ENCODE measurements at regions of chr17 and their contacts with region 1.

Region 1: DNA sequence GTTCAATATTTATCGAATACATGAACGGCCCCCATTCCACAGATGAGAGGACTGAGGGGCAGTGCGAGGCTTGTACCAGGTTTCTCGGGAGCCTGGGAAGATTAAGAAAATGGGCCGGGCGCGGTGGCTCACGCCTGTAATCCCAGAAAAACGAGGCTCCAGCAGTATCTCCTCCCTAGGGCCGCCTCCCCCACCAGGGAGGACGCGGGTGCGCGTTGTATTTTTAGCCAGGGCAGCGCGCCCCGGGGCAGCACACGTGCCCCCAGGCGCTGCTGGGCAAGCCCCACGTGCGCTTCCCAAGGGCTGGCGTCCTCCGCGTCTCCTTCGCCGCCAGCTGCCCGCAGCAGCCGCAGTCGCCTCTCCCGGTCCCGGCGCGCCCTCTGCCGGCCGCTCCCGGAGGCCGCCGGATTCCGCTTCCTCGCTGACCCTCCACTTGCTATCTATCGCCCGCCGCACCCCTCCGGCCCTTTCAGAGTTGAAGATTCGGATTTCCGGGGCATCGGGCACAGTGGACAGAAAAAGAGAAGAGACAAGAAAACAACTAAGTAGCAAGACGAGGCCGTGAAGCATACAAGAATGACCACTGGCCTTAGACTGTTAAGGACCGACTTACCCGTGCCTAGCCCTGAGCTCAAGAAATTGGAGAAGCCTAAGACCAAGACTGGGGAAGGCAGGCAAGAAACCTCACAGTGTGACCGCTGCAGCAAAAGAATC is 1.9 kb upstream of the YBX2 start:
- DNase-seq: peak; percentile 64
- H3K4me3 Mint-ChIP-seq: no peak overlapping the region
- H3K27ac Mint-ChIP-seq: no peak overlapping the region
- H3K4me1 Mint-ChIP-seq: peaks cover 13% of the 10 kb centered on the region
- H3K27me3 Mint-ChIP-seq: peaks cover 36% of the 10 kb centered on the region

Region 2: GRCh38 chr17:7045909-7046724 is 250.2 kb before region 1 on chr17:
- intact Hi-C with region 1: loop called (anchors 1 kb)
- DNase-seq: no peak
- H3K4me3 Mint-ChIP-seq: peak overlapping the region; percentile 75
- H3K27ac Mint-ChIP-seq: peak overlapping the region; percentile 68
- H3K4me1 Mint-ChIP-seq: peaks cover 21% of the 10 kb centered on the region
- H3K27me3 Mint-ChIP-seq: peaks cover 12% of the 10 kb centered on the region

Region 3: DNA sequence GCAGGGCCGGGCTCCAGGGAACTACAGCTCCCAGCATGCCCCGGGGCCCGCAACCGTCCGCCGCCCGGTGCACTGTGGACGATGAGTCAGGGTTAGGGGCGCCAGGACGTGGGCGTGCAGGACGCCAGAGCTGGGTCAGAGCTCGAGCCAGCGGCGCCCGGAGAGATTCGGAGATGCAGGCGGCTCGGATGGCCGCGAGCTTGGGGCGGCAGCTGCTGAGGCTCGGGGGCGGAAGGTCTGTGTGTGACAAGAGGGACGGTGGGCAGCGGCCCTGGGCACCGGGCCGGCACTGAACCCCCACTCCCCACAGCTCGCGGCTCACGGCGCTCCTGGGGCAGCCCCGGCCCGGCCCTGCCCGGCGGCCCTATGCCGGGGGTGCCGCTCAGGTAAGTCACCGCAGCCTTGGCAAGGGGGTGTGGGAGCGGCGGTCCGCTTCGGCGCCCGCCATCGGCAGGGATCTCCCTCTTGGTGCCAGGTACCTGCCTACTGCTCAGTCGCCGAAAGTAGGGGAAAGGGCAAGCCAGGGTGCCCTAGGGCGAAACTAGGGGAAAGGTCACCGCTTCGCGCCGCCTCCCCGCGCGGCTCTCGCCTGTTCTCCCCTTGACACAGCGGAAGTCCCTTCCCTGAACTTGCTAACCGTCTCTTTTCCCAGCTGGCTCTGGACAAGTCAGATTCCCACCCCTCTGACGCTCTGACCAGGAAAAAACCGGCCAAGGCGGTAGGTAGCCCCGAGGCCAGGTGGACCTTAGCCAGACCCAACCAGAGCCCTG is 76.3 kb before region 1 on chr17 and contains the starts of genes ACADVL and DLG4:
- intact Hi-C with region 1: loop called (anchors 1 kb)
- DNase-seq: peak; percentile 67
- H3K4me3 Mint-ChIP-seq: peak within 1 kb of the TSS; percentile 99
- H3K27ac Mint-ChIP-seq: peak within 1 kb of the TSS; percentile 98
- H3K4me1 Mint-ChIP-seq: peaks cover 48% of the 10 kb centered on the region
- H3K27me3 Mint-ChIP-seq: no peaks in the 10 kb centered on the region
- total RNA-seq, gene ACADVL: 492 and 503 TPM in 2 replicates
- total RNA-seq, gene DLG4: 10.5 and 10.6 TPM in 2 replicates

Region 4: GRCh38 chr17:7252176-7253043 is 43.9 kb before region 1 on chr17 and contains the start of gene ELP5:
- intact Hi-C with region 1: loop called (anchors 2 kb)
- DNase-seq: peak; percentile 88
- H3K4me3 Mint-ChIP-seq: peak within 1 kb of the TSS; percentile 92
- H3K27ac Mint-ChIP-seq: peak within 1 kb of the TSS; percentile 98
- H3K4me1 Mint-ChIP-seq: peaks cover 33% of the 10 kb centered on the region
- H3K27me3 Mint-ChIP-seq: no peaks in the 10 kb centered on the region
- total RNA-seq, gene ELP5: 64.8 and 65.3 TPM in 2 replicates

Region 5: GRCh38 chr17:7280519-7281429 is 15.6 kb before region 1 on chr17:
- intact Hi-C with region 1: loop called (anchors 1 kb)
- DNase-seq: peak; percentile 69
- H3K4me3 Mint-ChIP-seq: peak overlapping the region; percentile 78
- H3K27ac Mint-ChIP-seq: peak overlapping the region; percentile 42
- H3K4me1 Mint-ChIP-seq: peaks cover 15% of the 10 kb centered on the region
- H3K27me3 Mint-ChIP-seq: peaks cover 36% of the 10 kb centered on the region